GM12878 (cell line): ENCODE measurements at regions of chr1 and their contacts with region 1.

Region 1: DNA sequence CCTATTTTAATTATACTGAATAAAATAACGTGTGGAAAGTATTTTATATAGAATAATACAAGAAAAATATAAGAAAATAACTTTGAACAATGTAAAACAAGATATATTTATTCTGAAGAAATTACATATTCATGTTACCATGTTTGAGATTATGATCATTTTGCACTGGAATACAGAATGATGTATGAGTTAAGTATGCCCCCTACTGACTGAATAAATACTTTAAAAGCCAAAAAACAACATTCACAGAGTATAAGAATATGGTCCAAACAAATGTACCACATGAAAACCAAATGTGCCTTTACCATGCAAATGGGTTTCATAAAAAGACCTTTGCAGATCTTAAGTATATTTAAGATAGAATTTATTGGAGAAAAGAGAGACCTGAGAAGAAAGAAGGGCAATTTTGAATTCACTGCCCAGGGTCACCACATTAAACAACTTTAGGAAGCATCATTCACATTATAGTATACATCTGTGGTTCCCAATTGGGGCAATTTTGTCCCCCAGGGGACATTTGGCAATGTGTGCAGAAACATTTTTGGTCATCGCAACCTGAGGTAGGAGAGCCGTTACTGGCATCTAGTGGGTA is 136.6 kb upstream of the GFI1 start:
- DNase-seq: no peak
- ATAC-seq: peak; percentile 81
- H3K4me3 ChIP-seq: no peak overlapping the region
- H3K27ac ChIP-seq: no peak overlapping the region
- H3K4me1 ChIP-seq: no peaks in the 10 kb centered on the region
- H3K27me3 ChIP-seq: no peaks in the 10 kb centered on the region
- CTCF ChIP-seq: peak in 2 of 3 experiments; percentile 16 to 34; a peak in 4 of 6 replicates
- EP300 ChIP-seq: no peak
- POLR2A ChIP-seq: no peak
- RAD21 ChIP-seq: peak; percentile 74

Region 2: DNA sequence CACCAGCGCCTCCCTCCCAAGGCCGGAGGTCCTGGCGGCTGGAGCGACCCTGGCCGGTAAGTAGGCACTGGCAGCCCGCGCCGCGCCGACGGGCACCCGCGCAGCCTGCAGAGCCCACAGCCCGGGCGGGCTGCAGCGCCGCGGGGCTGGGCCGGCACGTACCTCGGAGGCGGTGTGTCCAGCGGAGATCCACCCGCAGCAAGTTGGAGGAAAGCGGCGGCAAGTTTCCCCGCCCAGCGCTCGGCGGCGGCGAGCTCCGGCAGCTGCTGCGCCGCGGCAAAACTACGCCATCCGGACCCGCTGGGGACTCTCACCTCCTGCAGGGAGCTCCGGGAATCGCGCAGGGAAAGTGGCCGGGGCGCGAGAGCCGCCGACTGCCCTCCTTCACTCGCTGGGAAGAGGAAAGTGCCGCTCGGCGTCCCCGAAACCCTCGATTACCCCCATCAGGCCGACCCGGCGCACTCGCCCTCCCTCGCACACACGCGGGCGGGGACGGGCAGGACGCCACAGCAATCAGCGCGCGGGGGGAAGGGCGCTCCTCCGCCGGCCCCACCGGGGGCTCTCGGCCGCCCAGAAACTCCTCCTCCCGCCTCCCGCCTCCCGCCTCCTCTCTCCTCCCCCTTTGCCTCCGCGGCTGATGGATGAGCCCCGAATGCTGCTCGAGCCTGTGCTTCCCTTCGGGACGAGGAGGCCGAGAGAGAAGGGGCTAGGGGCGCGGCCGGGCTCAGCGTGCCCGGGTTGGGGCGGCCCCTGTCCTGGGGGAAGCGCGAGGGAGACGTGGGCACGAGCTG is 737.4 kb before region 1 on chr1 and contains the start of gene TGFBR3:
- CTCF ChIA-PET with region 1: no interaction called
- POLR2A ChIA-PET with region 1: no interaction called
- RAD21 ChIA-PET with region 1: no interaction called
- SMC1A ChIA-PET with region 1: no interaction called
- in situ Hi-C with region 1: no loop called
- intact Hi-C with region 1: loop called (anchors 5 kb)
- DNase-seq: no peak
- ATAC-seq: peak; percentile 87
- H3K4me3 ChIP-seq: peak within 1 kb of the TSS; percentile 85
- H3K27ac ChIP-seq: peak within 1 kb of the TSS; percentile 41
- H3K4me1 ChIP-seq: no peaks in the 10 kb centered on the region; the same call in 1 of the 2 replicates
- H3K27me3 ChIP-seq: peaks cover 0 to 5% of the 10 kb centered on the region in 2 experiments; a peak in 2 of 4 replicates
- CTCF ChIP-seq: peak; percentile 10 to 35 (median 34); a peak in 4 of 6 replicates
- EP300 ChIP-seq: no peak
- POLR2A ChIP-seq: peak; percentile 75
- RAD21 ChIP-seq: 0 out of 2 replicates have a peak, but pooled peaks have one; percentile 24
- polyA plus RNA-seq, gene TGFBR3: 2.7 to 3.1 TPM

Region 3: DNA sequence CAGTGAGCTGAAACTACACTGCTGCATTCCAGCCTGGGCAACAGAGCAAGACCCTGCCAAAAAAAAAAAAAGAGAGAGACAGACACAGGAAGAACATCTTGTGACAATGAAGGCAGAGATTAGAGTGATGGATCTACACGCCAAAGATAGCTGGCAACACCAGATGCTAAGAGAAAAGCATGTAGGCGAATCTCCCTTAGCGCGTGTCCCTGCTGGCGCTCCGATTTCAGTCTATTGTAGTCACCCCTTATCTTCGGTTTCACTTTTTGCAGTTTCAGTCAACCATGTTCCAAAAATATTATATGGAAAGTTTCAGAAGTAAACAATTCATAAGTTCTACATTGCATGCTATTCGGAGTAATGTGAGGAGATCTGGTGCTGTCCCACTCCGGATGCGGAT is 685.7 kb before region 1 on chr1:
- CTCF ChIA-PET with region 1: no interaction called
- POLR2A ChIA-PET with region 1: no interaction called
- RAD21 ChIA-PET with region 1: no interaction called
- SMC1A ChIA-PET with region 1: no interaction called
- in situ Hi-C with region 1: no loop called
- intact Hi-C with region 1: loop called (anchors 10 kb)
- DNase-seq: no peak
- ATAC-seq: no peak
- H3K4me3 ChIP-seq: no peak overlapping the region
- H3K27ac ChIP-seq: no peak overlapping the region
- H3K4me1 ChIP-seq: no peaks in the 10 kb centered on the region
- H3K27me3 ChIP-seq: no peaks in the 10 kb centered on the region
- CTCF ChIP-seq: no peak
- EP300 ChIP-seq: no peak
- POLR2A ChIP-seq: no peak
- RAD21 ChIP-seq: no peak

Region 4: GRCh38 chr1:91997607-91998195 is 625.6 kb before region 1 on chr1:
- CTCF ChIA-PET with region 1: interaction called, 9 read pairs
- POLR2A ChIA-PET with region 1: no interaction called
- RAD21 ChIA-PET with region 1: interaction called, 3 read pairs
- SMC1A ChIA-PET with region 1: interaction called, 3 read pairs
- in situ Hi-C with region 1: loop called (anchors 5 kb)
- intact Hi-C with region 1: loop called (anchors 1 kb)
- DNase-seq: peak; percentile 1
- ATAC-seq: 0 out of 3 replicates have a peak, but pooled peaks have one; percentile 42
- H3K4me3 ChIP-seq: no peak overlapping the region
- H3K27ac ChIP-seq: no peak overlapping the region
- H3K4me1 ChIP-seq: no peaks in the 10 kb centered on the region
- H3K27me3 ChIP-seq: no peaks in the 10 kb centered on the region
- CTCF ChIP-seq: peak; percentile 43 to 55 (median 54); a peak in 5 of 6 replicates
- EP300 ChIP-seq: no peak
- POLR2A ChIP-seq: no peak
- RAD21 ChIP-seq: peak; percentile 72

Region 5: GRCh38 chr1:92291372-92291999 is 331.8 kb before region 1 on chr1:
- CTCF ChIA-PET with region 1: interaction called, 10 read pairs
- POLR2A ChIA-PET with region 1: no interaction called
- RAD21 ChIA-PET with region 1: no interaction called
- SMC1A ChIA-PET with region 1: interaction called, 3 read pairs
- in situ Hi-C with region 1: no loop called
- intact Hi-C with region 1: no loop called
- DNase-seq: no peak
- ATAC-seq: peak; percentile 86
- H3K4me3 ChIP-seq: no peak overlapping the region
- H3K27ac ChIP-seq: no peak overlapping the region
- H3K4me1 ChIP-seq: no peaks in the 10 kb centered on the region
- H3K27me3 ChIP-seq: no peaks in the 10 kb centered on the region
- CTCF ChIP-seq: peak; percentile 54 to 72 (median 56); a peak in 5 of 6 replicates
- EP300 ChIP-seq: no peak
- POLR2A ChIP-seq: no peak
- RAD21 ChIP-seq: peak; percentile 58

Region 6: DNA sequence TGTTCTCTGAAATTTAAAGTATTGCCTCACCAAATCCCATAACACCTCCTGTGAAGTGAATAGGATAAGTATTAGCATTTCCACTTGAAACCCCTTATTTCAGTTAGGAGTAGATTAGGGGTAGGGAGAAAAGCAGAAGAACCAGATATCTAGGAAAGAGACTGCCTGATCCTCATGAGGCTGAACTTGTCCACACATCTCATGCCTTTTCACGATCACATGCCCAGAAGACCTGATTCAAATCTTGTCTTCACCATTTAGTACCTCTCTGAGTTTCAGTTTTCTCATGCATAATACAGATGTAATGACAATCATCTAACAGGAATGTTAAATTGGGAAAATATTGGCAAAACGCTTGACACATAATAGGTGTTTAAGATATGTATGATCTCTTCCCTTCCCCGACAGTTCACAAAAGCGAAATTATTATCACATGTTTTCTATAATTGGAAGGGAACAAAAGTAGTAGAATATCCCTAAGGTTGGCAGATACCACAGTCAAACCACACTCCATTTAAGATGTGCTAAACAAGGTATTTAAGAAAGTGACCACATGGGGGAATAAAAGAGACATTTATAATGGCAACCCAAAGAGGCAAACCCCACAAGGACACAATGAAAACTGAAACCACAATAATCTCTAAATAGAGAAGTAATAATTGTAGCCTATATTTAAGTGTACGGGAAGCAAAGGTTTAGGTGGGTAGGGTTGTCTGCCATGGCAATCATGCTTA is 161.8 kb before region 1 on chr1:
- CTCF ChIA-PET with region 1: no interaction called
- POLR2A ChIA-PET with region 1: no interaction called
- RAD21 ChIA-PET with region 1: no interaction called
- SMC1A ChIA-PET with region 1: no interaction called
- in situ Hi-C with region 1: no loop called
- intact Hi-C with region 1: loop called (anchors 5 kb)
- DNase-seq: no peak
- ATAC-seq: peak; percentile 87
- H3K4me3 ChIP-seq: no peak overlapping the region
- H3K27ac ChIP-seq: no peak overlapping the region
- H3K4me1 ChIP-seq: peaks cover 17% of the 10 kb centered on the region
- H3K27me3 ChIP-seq: no peaks in the 10 kb centered on the region
- CTCF ChIP-seq: peak in 2 of 3 experiments; percentile 23 to 41; a peak in 3 of 6 replicates
- EP300 ChIP-seq: 0 out of 4 replicates have a peak, but pooled peaks of 1 of the 2 experiments have one; percentile 42
- POLR2A ChIP-seq: no peak
- RAD21 ChIP-seq: peak; percentile 67